H1 (cell line): ENCODE measurements at regions of chr3 and their contacts with region 1.

Region 1: GRCh38 chr3:44913868-44914468 is 39.6 kb downstream of the TGM4 start:
- DNase-seq: peak; percentile 58 to 85
- H3K4me3 ChIP-seq: no peak overlapping the region
- H3K27ac ChIP-seq: no peak overlapping the region
- H3K4me1 ChIP-seq: peaks cover 0 to 2% (median 0%) of the 10 kb centered on the region in 4 experiments; a peak in 1 of 7 replicates
- H3K27me3 ChIP-seq: no peaks in the 10 kb centered on the region
- CTCF ChIP-seq: peak; percentile 77 to 96 (median 84)
- EP300 ChIP-seq: no peak
- POLR2A ChIP-seq: no peak
- RAD21 ChIP-seq: peak; percentile 84 to 85

Region 2: GRCh38 chr3:44529927-44530326 is 384.0 kb before region 1 on chr3:
- CTCF ChIA-PET with region 1: interaction called, 24 read pairs
- POLR2A ChIA-PET with region 1: no interaction called
- DNase-seq: no peak
- H3K4me3 ChIP-seq: no peak overlapping the region
- H3K27ac ChIP-seq: no peak overlapping the region
- H3K4me1 ChIP-seq: no peaks in the 10 kb centered on the region
- H3K27me3 ChIP-seq: peaks cover 0 to 2% (median 0%) of the 10 kb centered on the region in 4 experiments; a peak in 2 of 7 replicates
- CTCF ChIP-seq: peak in 2 of 3 experiments; percentile 5 to 44; a peak in 2 of 4 replicates
- EP300 ChIP-seq: no peak
- POLR2A ChIP-seq: no peak
- RAD21 ChIP-seq: peak; percentile 32 to 48; a peak in 3 of 4 replicates

Region 3: DNA sequence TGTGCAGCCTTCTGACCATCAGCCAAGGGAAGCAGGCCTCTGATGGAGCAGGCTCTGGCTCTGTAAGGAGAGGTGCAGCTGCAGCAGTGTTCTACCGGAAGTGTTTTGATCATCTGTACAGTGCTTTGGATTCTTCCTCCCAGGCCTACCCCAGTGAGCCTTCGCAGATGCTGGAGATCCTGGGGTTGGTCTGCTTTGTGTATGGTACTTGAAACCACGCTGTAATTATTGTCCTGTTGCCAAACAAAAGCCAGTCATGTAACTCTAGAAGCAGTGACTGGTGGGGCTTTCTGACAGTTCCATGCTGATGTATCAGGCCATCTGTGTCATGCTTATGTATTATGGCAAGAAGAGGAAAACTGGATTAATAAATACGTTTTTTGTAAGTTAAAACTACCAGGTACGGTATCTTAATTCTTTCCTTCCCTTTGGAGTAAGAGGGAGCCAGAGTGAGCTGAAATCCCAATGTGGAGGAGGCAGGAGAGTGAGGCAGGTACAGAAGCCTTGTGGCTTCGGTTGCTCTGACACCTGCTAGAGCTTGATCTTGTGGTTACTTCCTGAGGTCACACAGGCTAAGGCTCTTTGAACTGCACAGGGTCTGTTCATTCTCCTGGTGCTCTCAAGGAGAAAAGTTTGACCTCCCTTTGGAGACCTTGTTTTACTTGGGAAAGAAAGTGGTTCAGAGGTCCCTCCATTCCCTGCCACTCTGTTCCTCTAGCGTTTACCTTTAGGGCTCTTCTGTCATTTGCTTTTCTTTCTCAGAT is 48.5 kb before region 1 on chr3:
- CTCF ChIA-PET with region 1: interaction called, 11 read pairs
- POLR2A ChIA-PET with region 1: interaction called, 4 read pairs
- DNase-seq: no peak
- H3K4me3 ChIP-seq: no peak overlapping the region
- H3K27ac ChIP-seq: no peak overlapping the region
- H3K4me1 ChIP-seq: peaks cover 0 to 5% (median 4%) of the 10 kb centered on the region in 4 experiments; a peak in 5 of 7 replicates
- H3K27me3 ChIP-seq: no peaks in the 10 kb centered on the region
- CTCF ChIP-seq: no peak
- EP300 ChIP-seq: no peak
- POLR2A ChIP-seq: no peak
- RAD21 ChIP-seq: no peak

Region 4: DNA sequence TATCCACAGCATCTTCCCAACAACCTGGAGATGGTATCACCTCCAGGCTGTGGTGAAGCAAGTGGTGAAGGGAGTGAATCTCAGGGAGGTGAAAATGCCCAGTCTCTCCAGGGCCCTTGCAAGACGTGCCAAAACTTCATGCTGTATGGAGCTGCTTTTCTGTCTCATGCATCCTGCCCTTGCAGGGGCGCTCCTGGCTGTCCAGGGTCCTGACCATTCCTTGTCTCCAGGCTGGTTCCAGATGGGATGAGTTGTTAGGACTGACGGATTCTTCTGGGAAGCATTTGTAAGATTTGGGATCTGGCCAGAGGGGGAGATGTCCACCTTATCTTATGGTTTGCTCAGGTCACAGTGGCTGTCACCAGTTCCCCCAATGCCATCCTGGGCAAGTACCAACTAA is 23.7 kb before region 1 on chr3:
- CTCF ChIA-PET with region 1: interaction called, 31 read pairs
- POLR2A ChIA-PET with region 1: interaction called, 5 read pairs
- DNase-seq: no peak
- H3K4me3 ChIP-seq: no peak overlapping the region
- H3K27ac ChIP-seq: no peak overlapping the region
- H3K4me1 ChIP-seq: peaks cover 0 to 5% (median 3%) of the 10 kb centered on the region in 4 experiments; a peak in 3 of 7 replicates
- H3K27me3 ChIP-seq: no peaks in the 10 kb centered on the region
- CTCF ChIP-seq: no peak
- EP300 ChIP-seq: no peak
- POLR2A ChIP-seq: no peak
- RAD21 ChIP-seq: no peak

Region 5: GRCh38 chr3:44899683-44900367 is 14.1 kb before region 1 on chr3:
- CTCF ChIA-PET with region 1: interaction called, 20 read pairs
- POLR2A ChIA-PET with region 1: interaction called, 5 read pairs
- DNase-seq: no peak
- H3K4me3 ChIP-seq: no peak overlapping the region
- H3K27ac ChIP-seq: no peak overlapping the region
- H3K4me1 ChIP-seq: peaks cover 0 to 9% (median 6%) of the 10 kb centered on the region in 4 experiments; a peak in 4 of 7 replicates
- H3K27me3 ChIP-seq: no peaks in the 10 kb centered on the region
- CTCF ChIP-seq: no peak
- EP300 ChIP-seq: no peak
- POLR2A ChIP-seq: no peak
- RAD21 ChIP-seq: no peak

Region 6: GRCh38 chr3:44942202-44942921 is 28.4 kb after region 1 on chr3:
- CTCF ChIA-PET with region 1: interaction called, 28 read pairs
- POLR2A ChIA-PET with region 1: no interaction called
- DNase-seq: no peak
- H3K4me3 ChIP-seq: no peak overlapping the region
- H3K27ac ChIP-seq: no peak overlapping the region
- H3K4me1 ChIP-seq: no peaks in the 10 kb centered on the region
- H3K27me3 ChIP-seq: no peaks in the 10 kb centered on the region
- CTCF ChIP-seq: no peak
- EP300 ChIP-seq: no peak
- POLR2A ChIP-seq: no peak
- RAD21 ChIP-seq: no peak